Caco-2 (cell line): ENCODE measurements at regions of chr22 and their contacts with region 1.

Region 1: GRCh38 chr22:41001722-41002122 is 50.5 kb downstream of the RBX1 start:
- DNase-seq: peak; percentile 64 to 71
- H3K4me3 ChIP-seq: no peak overlapping the region
- H3K4me3 Mint-ChIP-seq: peak overlapping the region; percentile 62
- H3K27ac Mint-ChIP-seq: peak overlapping the region; percentile 77
- H3K4me1 ChIP-seq: peaks cover 18% of the 10 kb centered on the region
- H3K4me1 Mint-ChIP-seq: peaks cover 21% of the 10 kb centered on the region
- H3K27me3 ChIP-seq: no peaks in the 10 kb centered on the region
- H3K27me3 Mint-ChIP-seq: no peaks in the 10 kb centered on the region
- CTCF ChIP-seq: no peak

Region 2: GRCh38 chr22:40973099-40973498 is 28.6 kb before region 1 on chr22:
- CTCF ChIA-PET with region 1: no interaction called
- POLR2A ChIA-PET with region 1: interaction called, 11 read pairs
- intact Hi-C with region 1: no loop called
- DNase-seq: no peak
- H3K4me3 ChIP-seq: no peak overlapping the region
- H3K4me3 Mint-ChIP-seq: no peak overlapping the region
- H3K27ac Mint-ChIP-seq: no peak overlapping the region
- H3K4me1 ChIP-seq: no peaks in the 10 kb centered on the region
- H3K4me1 Mint-ChIP-seq: no peaks in the 10 kb centered on the region
- H3K27me3 ChIP-seq: no peaks in the 10 kb centered on the region
- H3K27me3 Mint-ChIP-seq: no peaks in the 10 kb centered on the region
- CTCF ChIP-seq: no peak

Region 3: DNA sequence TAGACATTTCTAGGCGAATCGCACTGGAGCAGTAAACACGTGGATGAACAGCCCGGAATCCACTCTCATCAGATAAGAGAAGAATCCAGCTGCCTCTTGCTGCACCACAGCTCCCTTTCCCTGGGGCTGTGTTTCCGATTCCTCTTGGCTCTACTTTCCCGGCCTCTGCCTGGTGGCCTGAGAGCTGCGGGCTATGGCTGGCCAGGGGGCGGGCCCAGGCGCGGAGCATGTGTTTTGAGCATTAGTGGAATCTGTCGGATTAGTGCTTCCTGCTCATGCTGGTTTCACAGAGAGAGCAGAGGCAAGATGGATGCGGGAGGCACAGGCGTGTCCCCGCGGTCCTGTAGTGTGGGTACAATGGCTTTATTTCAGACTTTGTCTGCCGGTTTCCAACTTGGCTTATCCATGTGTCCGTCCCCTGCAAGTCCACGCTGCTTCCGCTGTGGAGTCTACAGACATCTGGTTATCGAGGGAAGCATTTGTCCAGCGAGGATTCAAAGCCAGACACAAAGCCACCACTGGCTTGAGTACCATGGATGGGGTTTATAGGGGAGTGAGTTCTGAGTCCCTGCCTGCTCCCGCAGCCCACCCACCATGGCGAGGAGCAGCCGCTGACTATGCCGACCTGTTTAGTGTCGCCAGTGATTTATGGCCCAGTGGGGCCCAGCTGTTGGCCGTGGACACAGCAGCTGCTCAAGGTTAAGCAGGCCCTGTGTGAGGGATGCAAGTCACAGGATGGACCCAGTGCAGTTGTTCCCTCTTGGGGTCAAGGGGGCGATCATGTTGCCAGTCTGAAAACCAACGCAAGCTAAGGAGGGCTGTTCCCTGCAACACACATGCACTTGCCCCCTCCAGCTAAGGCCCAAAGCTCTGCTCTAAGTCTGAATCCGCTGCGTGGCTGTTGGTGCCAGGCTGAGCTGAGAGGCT is 47.3 kb after region 1 on chr22:
- CTCF ChIA-PET with region 1: interaction called, 4 read pairs
- POLR2A ChIA-PET with region 1: interaction called, 14 read pairs
- intact Hi-C with region 1: no loop called
- DNase-seq: peak; percentile 88 to 90
- H3K4me3 ChIP-seq: peak overlapping the region; percentile 9
- H3K4me3 Mint-ChIP-seq: peak overlapping the region; percentile 73
- H3K27ac Mint-ChIP-seq: peak overlapping the region; percentile 58
- H3K4me1 ChIP-seq: peaks cover 31% of the 10 kb centered on the region
- H3K4me1 Mint-ChIP-seq: peaks cover 14% of the 10 kb centered on the region
- H3K27me3 ChIP-seq: no peaks in the 10 kb centered on the region
- H3K27me3 Mint-ChIP-seq: no peaks in the 10 kb centered on the region
- CTCF ChIP-seq: no peak

Region 4: GRCh38 chr22:41181349-41182241 is 179.9 kb after region 1 on chr22:
- CTCF ChIA-PET with region 1: no interaction called
- POLR2A ChIA-PET with region 1: no interaction called
- intact Hi-C with region 1: no loop called
- DNase-seq: peak in 1 of 2 experiments; percentile 14
- H3K4me3 ChIP-seq: no peak overlapping the region
- H3K4me3 Mint-ChIP-seq: peak overlapping the region; percentile 15
- H3K27ac Mint-ChIP-seq: peak overlapping the region; percentile 66
- H3K4me1 ChIP-seq: peaks cover 4% of the 10 kb centered on the region
- H3K4me1 Mint-ChIP-seq: peaks cover 7% of the 10 kb centered on the region
- H3K27me3 ChIP-seq: no peaks in the 10 kb centered on the region
- H3K27me3 Mint-ChIP-seq: no peaks in the 10 kb centered on the region
- CTCF ChIP-seq: no peak

Region 5: GRCh38 chr22:41285820-41286638 is 284.3 kb after region 1 on chr22 and contains the start of gene RANGAP1:
- CTCF ChIA-PET with region 1: no interaction called
- POLR2A ChIA-PET with region 1: interaction called, 10 read pairs
- intact Hi-C with region 1: no loop called
- DNase-seq: peak; percentile 98 to 99
- H3K4me3 ChIP-seq: peak within 1 kb of the TSS; percentile 78
- H3K4me3 Mint-ChIP-seq: peak within 1 kb of the TSS; percentile 88
- H3K27ac Mint-ChIP-seq: peak within 1 kb of the TSS; percentile 92
- H3K4me1 ChIP-seq: peaks cover 39% of the 10 kb centered on the region
- H3K4me1 Mint-ChIP-seq: peaks cover 32% of the 10 kb centered on the region
- H3K27me3 ChIP-seq: no peaks in the 10 kb centered on the region
- H3K27me3 Mint-ChIP-seq: no peaks in the 10 kb centered on the region
- CTCF ChIP-seq: peak in 1 of 2 experiments; percentile 23
- total RNA-seq, gene RANGAP1: 106 and 112 TPM in 2 replicates